ENCODE measurements at regions of chr20 and their contacts with region 1.

Region 1: DNA sequence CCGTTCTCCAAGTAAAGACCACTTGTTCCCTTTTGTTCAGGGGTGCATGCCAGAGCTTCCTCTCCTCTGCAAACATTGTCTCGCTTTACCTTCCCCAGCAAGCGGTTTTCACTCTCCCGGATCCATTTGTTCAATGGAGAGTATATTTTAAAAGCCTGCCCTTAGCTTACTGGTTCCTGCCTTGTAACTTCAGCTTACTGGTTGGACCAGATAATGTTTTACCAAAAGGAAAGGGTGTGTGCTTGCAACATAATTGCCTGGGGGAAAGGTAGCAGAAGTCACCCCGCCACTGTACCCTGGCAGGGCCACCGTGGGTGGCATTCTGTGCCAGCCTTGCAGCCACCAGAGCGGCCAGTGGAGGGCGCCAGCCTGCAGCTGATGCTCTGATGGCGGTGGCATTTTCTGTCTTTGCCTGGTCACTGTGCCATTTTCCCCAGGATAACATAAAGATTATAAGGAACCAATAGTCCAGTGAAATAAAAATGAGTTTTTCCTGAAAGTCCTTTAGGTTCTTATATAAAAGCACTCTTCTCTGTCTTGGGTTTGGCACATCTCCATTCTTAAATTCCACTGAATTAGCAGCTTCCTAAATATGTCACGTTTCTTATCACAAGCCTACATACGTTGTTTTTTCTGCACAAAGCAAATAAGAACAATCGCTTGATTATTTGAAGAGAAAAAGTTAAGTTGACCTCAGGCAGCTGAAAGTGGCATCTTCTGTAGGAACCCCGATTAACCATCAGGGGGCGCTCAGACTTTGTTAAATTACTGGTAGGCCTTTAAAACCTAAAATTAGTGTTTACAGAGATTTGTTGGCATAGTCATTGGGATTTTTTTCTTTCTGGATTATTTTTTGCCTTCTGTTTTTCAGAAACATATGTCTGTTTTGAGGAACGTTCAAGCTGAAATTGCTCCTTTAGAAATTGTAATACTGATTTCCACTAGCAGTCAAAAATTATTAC is 67.4 kb upstream of the XRN2 start:
- DNase-seq: peak; percentile 32
- H3K4me3 ChIP-seq: no peak overlapping the region
- H3K27ac ChIP-seq: no peak overlapping the region
- H3K27me3 ChIP-seq: no peaks in the 10 kb centered on the region
- CTCF ChIP-seq: peak; percentile 77

Region 2: GRCh38 chr20:21125849-21126580 is 109.8 kb before region 1 on chr20 and contains the start of gene KIZ:
- CTCF ChIA-PET with region 1: interaction called, 31 read pairs
- POLR2A ChIA-PET with region 1: no interaction called
- DNase-seq: peak; percentile 86
- H3K4me3 ChIP-seq: peak within 1 kb of the TSS; percentile 81
- H3K27ac ChIP-seq: peak within 1 kb of the TSS; percentile 66
- H3K27me3 ChIP-seq: no peaks in the 10 kb centered on the region
- CTCF ChIP-seq: peak; percentile 35; the same call in 1 of the 2 replicates
- polyA plus RNA-seq, gene KIZ: 18.8 and 26.1 TPM in 2 replicates

Region 3: GRCh38 chr20:21246161-21246560 is 10.4 kb after region 1 on chr20:
- CTCF ChIA-PET with region 1: interaction called, 31 read pairs
- POLR2A ChIA-PET with region 1: no interaction called
- DNase-seq: no peak
- H3K4me3 ChIP-seq: no peak overlapping the region
- H3K27ac ChIP-seq: no peak overlapping the region
- H3K27me3 ChIP-seq: no peaks in the 10 kb centered on the region
- CTCF ChIP-seq: no peak

Region 4: GRCh38 chr20:21303061-21303871 is 67.5 kb after region 1 on chr20 and contains the start of gene XRN2:
- CTCF ChIA-PET with region 1: interaction called, 10 read pairs
- POLR2A ChIA-PET with region 1: interaction called, 4 read pairs
- DNase-seq: peak; percentile 79
- H3K4me3 ChIP-seq: peak within 1 kb of the TSS; percentile 75
- H3K27ac ChIP-seq: peak within 1 kb of the TSS; percentile 94
- H3K27me3 ChIP-seq: no peaks in the 10 kb centered on the region
- CTCF ChIP-seq: no peak
- polyA plus RNA-seq, gene XRN2: 96.7 and 120 TPM in 2 replicates

Region 5: DNA sequence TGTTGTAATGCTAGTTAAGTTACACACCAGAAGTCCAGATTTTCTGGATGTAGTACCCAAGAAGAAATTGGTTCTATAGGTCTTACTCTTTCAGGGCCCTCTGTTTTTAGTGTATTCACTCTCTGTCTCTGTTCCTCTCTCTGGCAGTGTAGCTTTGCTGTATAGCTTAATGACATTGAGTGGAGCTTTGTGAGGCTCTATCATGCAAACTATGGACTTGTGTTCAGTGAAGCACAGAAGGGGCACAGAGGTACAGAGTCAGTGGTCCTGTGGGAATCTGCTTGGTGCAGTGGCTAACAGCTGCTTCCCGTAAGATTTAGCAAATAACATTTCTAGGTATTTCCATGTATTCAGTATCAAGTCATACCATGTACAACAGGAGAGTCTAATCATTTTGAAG is 135.4 kb after region 1 on chr20:
- CTCF ChIA-PET with region 1: interaction called, 10 read pairs
- POLR2A ChIA-PET with region 1: no interaction called
- DNase-seq: no peak
- H3K4me3 ChIP-seq: no peak overlapping the region
- H3K27ac ChIP-seq: no peak overlapping the region
- H3K27me3 ChIP-seq: no peaks in the 10 kb centered on the region
- CTCF ChIP-seq: no peak

Region 6: GRCh38 chr20:21496452-21496851 is 260.7 kb after region 1 on chr20:
- CTCF ChIA-PET with region 1: interaction called, 270 read pairs
- POLR2A ChIA-PET with region 1: no interaction called
- DNase-seq: no peak
- H3K4me3 ChIP-seq: no peak overlapping the region
- H3K27ac ChIP-seq: no peak overlapping the region
- H3K27me3 ChIP-seq: peaks cover 6% of the 10 kb centered on the region
- CTCF ChIP-seq: no peak